Activated naive CD4-positive, alpha-beta T cell treated with anti-CD3 and anti-CD28 coated beads for 36 hours (primary cell): ENCODE measurements at regions of chr7 and their contacts with region 1.

Region 1: DNA sequence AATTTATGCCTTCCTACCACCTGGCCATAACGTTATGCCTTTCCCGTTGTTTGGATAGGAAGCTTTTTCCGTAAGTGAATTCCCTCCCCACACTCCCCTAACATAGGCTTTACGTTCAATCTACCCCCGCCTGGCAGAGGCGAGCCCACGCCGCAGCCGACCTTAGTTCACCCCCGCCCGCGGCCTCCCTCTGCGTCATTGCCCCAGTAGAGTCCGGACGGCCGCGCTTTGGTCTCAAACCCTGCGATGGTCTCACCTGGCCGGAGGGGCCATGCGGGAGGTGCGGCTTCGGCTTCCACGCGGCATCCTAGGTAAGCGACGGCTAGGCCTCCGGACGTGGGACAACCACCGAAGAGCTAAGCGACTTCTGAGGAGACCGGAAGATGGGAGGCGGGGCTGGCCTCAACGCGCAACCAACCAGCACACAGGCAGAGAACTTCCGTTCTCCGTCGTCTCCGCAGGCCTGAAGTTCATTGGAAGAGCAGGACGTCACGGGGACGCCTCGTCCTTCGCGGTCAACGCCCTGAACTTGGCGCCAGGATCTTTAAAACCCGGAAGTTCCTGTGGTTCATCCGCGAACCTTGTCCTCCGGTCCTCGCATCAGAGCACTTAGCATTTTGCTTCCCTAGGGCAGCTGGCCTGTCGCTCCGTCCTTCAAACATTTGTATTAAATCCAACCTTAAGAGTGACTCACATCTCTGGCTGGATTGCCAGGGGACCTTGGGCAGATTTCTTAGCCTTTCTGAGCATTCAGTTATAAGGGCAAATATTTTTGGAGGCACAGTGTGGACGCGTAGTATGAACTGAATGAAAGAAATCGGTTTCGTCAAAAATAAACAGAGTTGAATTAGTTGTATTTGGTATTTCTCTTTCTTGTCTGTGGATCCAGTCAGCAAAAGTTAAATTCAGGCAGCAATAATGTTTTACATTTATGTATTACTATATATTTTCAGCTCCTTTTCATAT is at the start of gene CHCHD2:
- DNase-seq: peak; percentile 97
- H3K4me3 Mint-ChIP-seq: peak within 1 kb of the TSS; percentile 90
- H3K27ac Mint-ChIP-seq: peak within 1 kb of the TSS; percentile 98
- H3K4me1 Mint-ChIP-seq: peaks cover 31% of the 10 kb centered on the region
- H3K27me3 Mint-ChIP-seq: no peaks in the 10 kb centered on the region
- total RNA-seq, gene CHCHD2: 793 TPM

Region 2: DNA sequence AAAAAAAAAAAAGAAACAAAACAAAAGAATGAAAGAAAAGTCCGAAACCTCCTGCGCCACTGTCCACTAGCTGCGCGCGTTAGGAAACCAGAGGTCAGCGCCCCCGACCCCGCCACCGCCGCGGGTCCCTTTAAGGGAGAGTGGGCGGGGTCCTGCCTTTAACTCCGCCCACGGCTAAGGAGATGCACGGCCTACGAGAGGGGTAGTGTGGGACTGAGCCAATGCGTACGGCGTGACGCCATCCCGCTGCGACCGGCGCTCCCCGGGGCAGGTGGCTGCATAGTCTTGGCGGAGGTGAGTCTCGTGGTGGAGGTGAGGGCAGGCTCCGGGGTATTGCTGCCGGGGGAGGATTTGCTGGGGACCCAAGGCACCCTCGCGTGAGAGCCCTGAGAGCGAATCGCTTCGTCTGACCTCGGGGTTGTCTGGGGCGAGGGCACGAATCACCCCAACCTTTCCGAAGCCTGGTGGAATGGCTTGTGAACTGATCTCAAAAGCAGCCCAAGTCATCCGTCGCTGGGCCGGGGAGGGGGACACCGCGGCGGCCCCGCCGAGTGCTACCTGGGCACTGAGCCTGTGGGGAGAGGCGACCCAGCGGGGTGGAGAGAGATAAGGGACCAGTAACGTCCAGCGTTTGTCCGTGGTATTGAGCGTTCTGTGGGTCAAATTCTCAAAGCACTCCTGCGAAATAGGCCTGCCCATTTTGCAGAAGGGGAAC is 154.6 kb before region 1 on chr7 and contains the start of gene MRPS17:
- CTCF ChIA-PET with region 1: no interaction called
- intact Hi-C with region 1: loop called (anchors 1 kb)
- DNase-seq: peak; percentile 96
- H3K4me3 Mint-ChIP-seq: peak within 1 kb of the TSS; percentile 99
- H3K27ac Mint-ChIP-seq: peak within 1 kb of the TSS; percentile 94
- H3K4me1 Mint-ChIP-seq: peaks cover 28% of the 10 kb centered on the region
- H3K27me3 Mint-ChIP-seq: peaks cover 2% of the 10 kb centered on the region
- total RNA-seq, gene MRPS17: 17.3 to 18.7 TPM

Region 3: DNA sequence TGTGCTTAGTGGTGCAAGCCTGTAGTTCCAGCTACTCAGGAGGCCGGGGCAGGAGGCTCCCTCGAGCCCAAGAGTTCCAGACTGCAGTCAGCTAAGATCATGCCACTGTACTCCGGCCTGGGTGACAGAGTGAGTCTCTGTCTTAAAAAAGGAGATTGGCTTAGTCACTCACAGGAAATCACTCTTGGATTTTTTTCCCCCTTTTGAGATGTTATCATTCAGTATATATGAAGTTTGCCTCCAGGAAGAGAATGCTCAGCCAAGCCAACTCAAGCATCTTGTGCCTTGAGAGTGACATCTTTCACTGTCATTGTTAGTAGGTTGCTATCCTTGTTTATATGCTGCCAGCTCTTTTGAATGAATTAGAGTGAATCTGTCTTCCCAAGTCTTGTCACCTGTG is 114.0 kb before region 1 on chr7:
- CTCF ChIA-PET with region 1: no interaction called
- intact Hi-C with region 1: no loop called
- DNase-seq: no peak
- H3K4me3 Mint-ChIP-seq: no peak overlapping the region
- H3K27ac Mint-ChIP-seq: no peak overlapping the region
- H3K4me1 Mint-ChIP-seq: no peaks in the 10 kb centered on the region
- H3K27me3 Mint-ChIP-seq: no peaks in the 10 kb centered on the region

Region 4: DNA sequence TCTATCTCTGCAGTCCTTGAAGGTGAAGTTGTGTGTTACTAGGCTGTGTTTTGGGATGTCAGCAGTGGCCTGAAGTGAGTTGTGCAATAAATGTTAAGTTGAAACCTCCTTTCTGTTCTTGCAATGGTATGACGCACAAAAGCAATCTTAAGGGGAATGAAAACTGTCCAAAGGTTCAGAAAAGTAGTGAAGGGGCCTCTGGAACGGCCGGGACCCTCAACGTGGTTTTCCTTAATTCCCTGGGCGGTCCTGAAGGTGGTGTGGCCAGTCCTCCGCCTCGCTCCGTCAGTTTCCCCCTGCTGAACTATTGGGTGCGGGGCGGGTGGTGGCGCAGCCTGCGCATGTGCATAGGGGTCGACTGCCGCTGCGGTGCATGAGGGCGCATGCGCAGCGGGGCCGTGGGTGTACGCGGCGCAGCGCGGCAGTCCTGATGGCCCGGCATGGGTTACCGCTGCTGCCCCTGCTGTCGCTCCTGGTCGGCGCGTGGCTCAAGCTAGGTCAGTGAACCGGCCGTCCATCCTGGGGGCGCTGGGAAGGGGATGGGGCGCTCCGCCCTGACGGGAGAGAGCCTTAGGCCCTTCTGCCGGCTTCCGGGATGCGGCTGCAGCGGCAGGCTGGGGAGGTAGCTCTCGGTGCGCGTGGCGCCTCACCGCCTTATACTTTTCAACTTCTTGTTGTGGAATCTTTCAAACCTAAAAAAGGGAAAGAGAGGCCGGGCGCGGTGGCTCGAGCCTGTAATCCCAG is 42.3 kb before region 1 on chr7 and contains the start of gene SUMF2:
- CTCF ChIA-PET with region 1: interaction called, 3 read pairs
- intact Hi-C with region 1: loop called (anchors 1 kb)
- DNase-seq: peak; percentile 90
- H3K4me3 Mint-ChIP-seq: peak within 1 kb of the TSS; percentile 88
- H3K27ac Mint-ChIP-seq: peak within 1 kb of the TSS; percentile 91
- H3K4me1 Mint-ChIP-seq: peaks cover 41% of the 10 kb centered on the region
- H3K27me3 Mint-ChIP-seq: no peaks in the 10 kb centered on the region
- total RNA-seq, gene SUMF2: 143 to 159 TPM

Region 5: DNA sequence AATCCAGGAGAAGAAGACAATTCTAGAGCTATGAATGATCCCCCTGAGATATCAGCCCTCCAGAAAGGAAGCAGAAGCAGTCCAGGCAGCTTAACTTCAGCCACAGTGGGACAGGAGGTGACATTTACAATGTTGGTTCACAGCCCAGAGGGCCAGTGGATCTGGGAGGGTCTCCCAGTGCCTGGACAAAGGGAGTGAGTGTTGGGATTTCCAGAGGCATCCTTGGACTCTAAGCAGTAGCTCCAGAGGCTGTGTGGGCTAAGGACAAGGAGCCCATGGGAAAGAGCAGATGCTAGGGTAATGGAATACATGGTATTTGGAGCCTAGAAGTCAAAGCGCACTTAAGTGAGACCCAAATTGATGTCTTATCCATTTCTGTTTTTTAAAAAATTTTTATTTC is 107.2 kb after region 1 on chr7:
- CTCF ChIA-PET with region 1: no interaction called
- intact Hi-C with region 1: no loop called
- DNase-seq: no peak
- H3K4me3 Mint-ChIP-seq: no peak overlapping the region
- H3K27ac Mint-ChIP-seq: no peak overlapping the region
- H3K4me1 Mint-ChIP-seq: no peaks in the 10 kb centered on the region
- H3K27me3 Mint-ChIP-seq: peaks cover under 1% of the 10 kb centered on the region